CD4-positive, alpha-beta T cell (primary cell): ENCODE measurements at regions of chrX and their contacts with region 1.

Region 1: GRCh38 chrX:3651276-3651675 is 62.2 kb downstream of the PRKX start:
- DNase-seq: peak in 4 of 14 experiments; percentile 30 to 44 (median 38)
- ATAC-seq: peak; percentile 41
- H3K4me3 ChIP-seq: no peak overlapping the region
- H3K4me3 Mint-ChIP-seq: no peak overlapping the region
- H3K27ac ChIP-seq: no peak overlapping the region
- H3K27ac Mint-ChIP-seq: no peak overlapping the region
- H3K4me1 ChIP-seq: no peaks in the 10 kb centered on the region
- H3K4me1 Mint-ChIP-seq: no peaks in the 10 kb centered on the region
- H3K27me3 ChIP-seq: no peaks in the 10 kb centered on the region
- H3K27me3 Mint-ChIP-seq: no peaks in the 10 kb centered on the region
- CTCF ChIP-seq: peak; percentile 62

Region 2: DNA sequence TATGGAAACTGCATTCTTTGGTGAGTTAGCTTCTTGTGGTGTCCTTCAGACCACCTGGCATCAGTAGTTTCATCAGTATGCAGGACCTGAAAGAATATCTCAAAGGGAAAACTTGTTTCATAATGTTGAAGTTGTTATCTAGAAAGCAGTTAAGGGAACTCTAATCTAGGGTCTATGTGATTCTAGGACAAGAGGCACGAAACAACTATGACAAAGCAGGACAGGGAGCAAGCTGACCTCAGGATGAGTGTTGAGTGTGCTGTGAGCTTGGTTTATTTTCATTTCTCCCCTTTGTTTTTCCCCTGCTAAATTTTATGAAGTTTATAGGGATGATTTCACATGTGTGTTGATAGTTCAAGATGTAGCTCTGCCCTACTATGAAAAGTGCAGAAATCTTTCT is 370.6 kb before region 1 on chrX:
- CTCF ChIA-PET with region 1: no interaction called
- POLR2A ChIA-PET with region 1: no interaction called
- intact Hi-C with region 1: no loop called
- DNase-seq: no peak
- ATAC-seq: no peak
- H3K4me3 ChIP-seq: no peak overlapping the region
- H3K4me3 Mint-ChIP-seq: no peak overlapping the region
- H3K27ac ChIP-seq: no peak overlapping the region
- H3K27ac Mint-ChIP-seq: no peak overlapping the region
- H3K4me1 ChIP-seq: no peaks in the 10 kb centered on the region
- H3K4me1 Mint-ChIP-seq: no peaks in the 10 kb centered on the region
- H3K27me3 ChIP-seq: no peaks in the 10 kb centered on the region
- H3K27me3 Mint-ChIP-seq: no peaks in the 10 kb centered on the region
- CTCF ChIP-seq: no peak

Region 3: DNA sequence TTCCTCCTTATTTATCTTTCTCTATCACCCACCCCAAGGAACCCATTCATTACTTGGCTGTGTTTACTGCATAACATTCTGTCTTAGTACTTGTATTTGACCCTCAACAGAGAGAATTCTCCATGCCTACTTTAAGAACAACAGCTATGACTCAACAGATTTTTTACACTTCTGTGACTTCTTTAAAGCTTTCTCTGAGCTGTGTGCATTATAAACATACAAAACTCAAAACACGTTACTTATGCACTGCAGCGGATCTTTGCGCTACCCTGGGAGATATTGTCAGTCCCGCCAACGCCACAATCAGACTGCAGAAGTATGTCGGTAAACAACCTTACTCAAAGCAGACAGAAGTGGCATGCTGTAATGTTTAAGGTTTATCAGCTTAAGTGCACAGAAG is 27.1 kb after region 1 on chrX:
- CTCF ChIA-PET with region 1: no interaction called
- POLR2A ChIA-PET with region 1: no interaction called
- intact Hi-C with region 1: no loop called
- DNase-seq: no peak
- ATAC-seq: no peak
- H3K4me3 ChIP-seq: no peak overlapping the region
- H3K4me3 Mint-ChIP-seq: no peak overlapping the region
- H3K27ac ChIP-seq: no peak overlapping the region
- H3K27ac Mint-ChIP-seq: no peak overlapping the region
- H3K4me1 ChIP-seq: peaks cover 7% of the 10 kb centered on the region
- H3K4me1 Mint-ChIP-seq: peaks cover 14% of the 10 kb centered on the region
- H3K27me3 ChIP-seq: no peaks in the 10 kb centered on the region
- H3K27me3 Mint-ChIP-seq: no peaks in the 10 kb centered on the region
- CTCF ChIP-seq: no peak

Region 4: GRCh38 chrX:3697701-3698279 is 46.5 kb after region 1 on chrX:
- CTCF ChIA-PET with region 1: no interaction called
- POLR2A ChIA-PET with region 1: no interaction called
- intact Hi-C with region 1: loop called in 1 of 2 experiments (anchors 5 kb)
- DNase-seq: no peak
- ATAC-seq: no peak
- H3K4me3 ChIP-seq: no peak overlapping the region
- H3K4me3 Mint-ChIP-seq: no peak overlapping the region
- H3K27ac ChIP-seq: no peak overlapping the region
- H3K27ac Mint-ChIP-seq: peak overlapping the region; percentile 58
- H3K4me1 ChIP-seq: peaks cover 31% of the 10 kb centered on the region
- H3K4me1 Mint-ChIP-seq: peaks cover 44% of the 10 kb centered on the region
- H3K27me3 ChIP-seq: no peaks in the 10 kb centered on the region
- H3K27me3 Mint-ChIP-seq: no peaks in the 10 kb centered on the region
- CTCF ChIP-seq: no peak

Region 5: GRCh38 chrX:3788509-3789233 is 137.4 kb after region 1 on chrX:
- CTCF ChIA-PET with region 1: no interaction called
- POLR2A ChIA-PET with region 1: no interaction called
- intact Hi-C with region 1: loop called in 1 of 2 experiments (anchors 5 kb)
- DNase-seq: peak in 5 of 14 experiments; percentile 6 to 42 (median 11)
- ATAC-seq: no peak
- H3K4me3 ChIP-seq: no peak overlapping the region
- H3K4me3 Mint-ChIP-seq: no peak overlapping the region
- H3K27ac ChIP-seq: no peak overlapping the region
- H3K27ac Mint-ChIP-seq: no peak overlapping the region
- H3K4me1 ChIP-seq: peaks cover 5% of the 10 kb centered on the region
- H3K4me1 Mint-ChIP-seq: no peaks in the 10 kb centered on the region
- H3K27me3 ChIP-seq: no peaks in the 10 kb centered on the region
- H3K27me3 Mint-ChIP-seq: no peaks in the 10 kb centered on the region
- CTCF ChIP-seq: no peak

Region 6: DNA sequence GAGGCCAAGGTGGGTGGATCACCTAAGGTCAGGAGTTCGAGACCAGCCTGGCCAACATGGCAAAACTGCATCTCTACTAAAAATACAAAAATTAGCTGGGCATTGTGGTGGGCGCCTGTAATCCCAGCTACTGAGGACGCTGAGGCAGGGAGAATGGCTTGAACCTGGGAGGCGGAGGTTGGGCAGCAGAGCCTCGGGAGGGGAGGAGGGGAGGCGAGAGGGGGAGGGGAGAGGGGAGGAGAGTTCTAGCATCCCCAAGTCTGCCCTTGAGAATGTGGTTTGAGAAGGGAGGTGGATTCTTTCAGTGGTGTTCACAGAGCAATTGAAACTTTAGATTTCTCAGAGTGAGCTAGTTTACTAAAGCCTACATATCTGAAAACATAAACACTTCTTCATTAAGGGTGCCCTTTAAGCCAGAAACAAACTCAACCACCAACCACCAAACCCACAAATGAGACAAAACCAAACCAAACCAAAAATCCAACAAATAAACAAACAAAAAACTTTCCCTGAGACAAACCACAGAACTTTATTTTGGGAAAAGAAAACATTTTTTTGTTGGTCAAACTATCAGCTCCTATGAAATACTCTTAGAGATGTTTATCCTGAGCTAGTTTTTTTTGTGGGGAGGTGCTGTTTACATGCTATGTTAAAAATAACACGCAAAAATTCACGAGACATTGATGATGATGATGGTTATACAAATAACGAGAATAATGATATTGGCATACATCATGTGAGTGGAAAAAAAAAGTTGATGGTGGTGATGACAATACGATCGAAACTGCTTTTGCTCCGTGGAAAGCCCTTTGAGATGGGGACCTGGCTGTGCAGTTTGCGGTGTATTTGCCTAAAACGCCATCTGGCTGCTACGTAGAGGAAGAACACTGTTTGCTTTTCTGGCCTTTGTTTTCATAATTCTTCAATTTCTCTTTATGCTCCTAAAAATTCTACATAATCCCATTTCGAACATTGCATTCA is 160.3 kb after region 1 on chrX:
- CTCF ChIA-PET with region 1: interaction called, 7 read pairs
- POLR2A ChIA-PET with region 1: interaction called, 4 read pairs
- intact Hi-C with region 1: loop called (anchors 1 kb)
- DNase-seq: peak in 12 of 14 experiments; percentile 7 to 83 (median 30)
- ATAC-seq: no peak
- H3K4me3 ChIP-seq: no peak overlapping the region
- H3K4me3 Mint-ChIP-seq: peak overlapping the region; percentile 68
- H3K27ac ChIP-seq: no peak overlapping the region
- H3K27ac Mint-ChIP-seq: peak overlapping the region; percentile 47
- H3K4me1 ChIP-seq: peaks cover 14% of the 10 kb centered on the region
- H3K4me1 Mint-ChIP-seq: peaks cover 9% of the 10 kb centered on the region
- H3K27me3 ChIP-seq: peaks cover under 1 to 5% of the 10 kb centered on the region in 2 experiments
- H3K27me3 Mint-ChIP-seq: peaks cover 26% of the 10 kb centered on the region
- CTCF ChIP-seq: peak; percentile 61